PC-9 (cell line): ENCODE measurements at regions of chr11 and their contacts with region 1.

Region 1: GRCh38 chr11:65418711-65419459 is 3.7 kb upstream of the NEAT1 start:
- DNase-seq: peak; percentile 98 to 99
- H3K4me3 ChIP-seq: peak overlapping the region; percentile 59
- H3K27ac ChIP-seq: peak overlapping the region; percentile 100
- H3K4me1 ChIP-seq: peaks cover 57% of the 10 kb centered on the region
- H3K27me3 ChIP-seq: no peaks in the 10 kb centered on the region
- CTCF ChIP-seq: no peak

Region 2: GRCh38 chr11:64317957-64318693 is 1100.8 kb before region 1 on chr11 and contains the start of gene PRDX5:
- CTCF ChIA-PET with region 1: no interaction called
- POLR2A ChIA-PET with region 1: interaction called, 10 read pairs
- intact Hi-C with region 1: no loop called
- DNase-seq: peak; percentile 92 to 99
- H3K4me3 ChIP-seq: peak within 1 kb of the TSS; percentile 69
- H3K27ac ChIP-seq: peak within 1 kb of the TSS; percentile 87
- H3K4me1 ChIP-seq: peaks cover 47% of the 10 kb centered on the region
- H3K27me3 ChIP-seq: no peaks in the 10 kb centered on the region
- CTCF ChIP-seq: peak; percentile 39; the same call in 1 of the 2 replicates
- total RNA-seq, gene PRDX5: 381 and 441 TPM in 2 replicates

Region 3: GRCh38 chr11:65290448-65291165 is 128.3 kb before region 1 on chr11:
- CTCF ChIA-PET with region 1: no interaction called
- POLR2A ChIA-PET with region 1: interaction called, 11 read pairs
- intact Hi-C with region 1: no loop called
- DNase-seq: peak; percentile 32 to 52
- H3K4me3 ChIP-seq: no peak overlapping the region
- H3K27ac ChIP-seq: peak overlapping the region; percentile 92
- H3K4me1 ChIP-seq: peaks cover 34% of the 10 kb centered on the region
- H3K27me3 ChIP-seq: no peaks in the 10 kb centered on the region
- CTCF ChIP-seq: no peak

Region 4: DNA sequence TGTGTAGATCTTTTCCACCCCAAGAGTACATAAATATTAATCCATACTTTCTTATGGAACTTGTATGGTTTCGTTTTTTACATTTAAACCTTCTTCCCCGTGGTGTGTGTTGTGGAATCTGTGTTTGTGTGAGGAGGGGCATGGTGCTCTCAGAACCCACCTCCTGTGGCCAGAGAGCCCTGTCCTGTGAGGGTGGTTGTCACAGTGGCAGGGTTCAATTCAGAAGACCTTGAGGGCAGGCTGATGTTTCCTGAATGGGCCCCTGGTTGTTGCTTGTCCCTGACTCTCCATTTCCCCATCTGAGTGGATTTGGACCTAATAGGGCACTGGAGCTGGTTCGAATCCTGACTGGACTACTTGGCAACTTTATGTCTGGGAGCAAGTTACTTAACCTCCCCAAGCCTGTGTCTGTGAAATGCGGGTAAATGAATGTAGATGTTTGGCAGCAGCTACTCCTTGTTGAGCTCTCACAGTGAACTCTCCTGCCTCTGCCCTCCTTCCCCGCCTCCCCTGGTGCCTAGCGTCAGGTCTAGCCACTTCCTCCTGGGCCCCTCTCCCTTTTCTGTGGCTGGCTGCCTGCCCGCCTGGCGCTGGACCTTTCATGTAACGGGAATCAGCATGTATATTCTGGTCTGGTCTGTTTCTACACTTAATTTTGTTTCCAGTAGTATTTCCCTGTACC is 11.0 kb after region 1 on chr11:
- CTCF ChIA-PET with region 1: no interaction called
- POLR2A ChIA-PET with region 1: interaction called, 5 read pairs
- intact Hi-C with region 1: loop called (anchors 2 kb)
- DNase-seq: peak in 1 of 2 experiments; percentile 56
- H3K4me3 ChIP-seq: no peak overlapping the region
- H3K27ac ChIP-seq: peak overlapping the region; percentile 100
- H3K4me1 ChIP-seq: peaks cover 54% of the 10 kb centered on the region
- H3K27me3 ChIP-seq: no peaks in the 10 kb centered on the region
- CTCF ChIP-seq: no peak

Region 5: GRCh38 chr11:65454696-65455456 is 36.0 kb after region 1 on chr11:
- CTCF ChIA-PET with region 1: no interaction called
- POLR2A ChIA-PET with region 1: interaction called, 8 read pairs
- intact Hi-C with region 1: loop called (anchors 1 kb)
- DNase-seq: peak; percentile 81 to 91
- H3K4me3 ChIP-seq: peak overlapping the region; percentile 58
- H3K27ac ChIP-seq: peak overlapping the region; percentile 21
- H3K4me1 ChIP-seq: peaks cover 25% of the 10 kb centered on the region
- H3K27me3 ChIP-seq: no peaks in the 10 kb centered on the region
- CTCF ChIP-seq: no peak

Region 6: DNA sequence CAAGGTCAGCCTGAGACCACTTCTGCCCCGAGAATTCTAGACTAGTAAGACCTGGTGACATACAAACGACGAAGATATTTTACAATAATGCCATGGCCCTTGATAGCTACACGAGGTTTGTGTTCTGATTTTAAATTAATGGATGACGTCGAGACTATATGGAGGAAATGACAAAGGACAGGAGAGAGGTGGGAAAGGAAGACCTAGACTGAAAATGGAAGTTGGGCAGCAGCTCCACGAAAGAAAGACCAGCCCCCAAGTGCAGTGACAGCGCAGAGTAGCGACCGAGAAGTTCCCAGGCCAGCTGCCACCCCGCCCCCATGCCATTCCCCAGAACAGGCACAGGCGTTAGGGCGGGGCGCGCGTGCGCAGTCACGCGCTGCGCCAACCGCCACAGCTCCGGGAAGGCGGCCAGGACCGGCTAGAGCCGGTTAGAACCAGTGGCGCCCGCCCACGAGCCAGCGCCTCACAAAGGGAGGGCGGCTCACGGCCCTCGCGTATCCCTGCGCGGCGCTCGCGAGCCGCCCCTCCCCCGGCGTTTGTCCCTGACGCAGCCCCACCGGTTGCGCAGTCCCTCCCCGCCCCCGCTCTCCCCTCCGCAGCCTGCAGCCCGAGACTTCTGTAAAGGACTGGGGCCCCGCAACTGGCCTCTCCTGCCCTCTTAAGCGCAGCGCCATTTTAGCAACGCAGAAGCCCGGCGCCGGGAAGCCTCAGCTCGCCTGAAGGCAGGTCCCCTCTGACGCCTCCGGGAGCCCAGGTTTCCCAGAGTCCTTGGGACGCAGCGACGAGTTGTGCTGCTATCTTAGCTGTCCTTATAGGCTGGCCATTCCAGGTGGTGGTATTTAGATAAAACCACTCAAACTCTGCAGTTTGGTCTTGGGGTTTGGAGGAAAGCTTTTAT is 78.5 kb after region 1 on chr11:
- CTCF ChIA-PET with region 1: interaction called, 3 read pairs
- POLR2A ChIA-PET with region 1: interaction called, 36 read pairs
- intact Hi-C with region 1: loop called (anchors 2 kb)
- DNase-seq: peak; percentile 91 to 100
- H3K4me3 ChIP-seq: peak overlapping the region; percentile 99
- H3K27ac ChIP-seq: peak overlapping the region; percentile 97
- H3K4me1 ChIP-seq: peaks cover 39% of the 10 kb centered on the region
- H3K27me3 ChIP-seq: no peaks in the 10 kb centered on the region
- CTCF ChIP-seq: peak; percentile 13; the same call in 1 of the 2 replicates

Region 7: GRCh38 chr11:65569973-65570918 is 151.4 kb after region 1 on chr11 and contains the start of gene ZNRD2:
- CTCF ChIA-PET with region 1: no interaction called
- POLR2A ChIA-PET with region 1: interaction called, 3 read pairs
- intact Hi-C with region 1: loop called (anchors 5 kb)
- DNase-seq: peak; percentile 98 to 99
- H3K4me3 ChIP-seq: peak within 1 kb of the TSS; percentile 73
- H3K27ac ChIP-seq: peak within 1 kb of the TSS; percentile 68
- H3K4me1 ChIP-seq: peaks cover 54% of the 10 kb centered on the region
- H3K27me3 ChIP-seq: no peaks in the 10 kb centered on the region
- CTCF ChIP-seq: peak; percentile 57
- total RNA-seq, gene ZNRD2: 51.4 and 53.5 TPM in 2 replicates